ENCODE measurements at regions of chr6 and their contacts with region 1.

Region 1: DNA sequence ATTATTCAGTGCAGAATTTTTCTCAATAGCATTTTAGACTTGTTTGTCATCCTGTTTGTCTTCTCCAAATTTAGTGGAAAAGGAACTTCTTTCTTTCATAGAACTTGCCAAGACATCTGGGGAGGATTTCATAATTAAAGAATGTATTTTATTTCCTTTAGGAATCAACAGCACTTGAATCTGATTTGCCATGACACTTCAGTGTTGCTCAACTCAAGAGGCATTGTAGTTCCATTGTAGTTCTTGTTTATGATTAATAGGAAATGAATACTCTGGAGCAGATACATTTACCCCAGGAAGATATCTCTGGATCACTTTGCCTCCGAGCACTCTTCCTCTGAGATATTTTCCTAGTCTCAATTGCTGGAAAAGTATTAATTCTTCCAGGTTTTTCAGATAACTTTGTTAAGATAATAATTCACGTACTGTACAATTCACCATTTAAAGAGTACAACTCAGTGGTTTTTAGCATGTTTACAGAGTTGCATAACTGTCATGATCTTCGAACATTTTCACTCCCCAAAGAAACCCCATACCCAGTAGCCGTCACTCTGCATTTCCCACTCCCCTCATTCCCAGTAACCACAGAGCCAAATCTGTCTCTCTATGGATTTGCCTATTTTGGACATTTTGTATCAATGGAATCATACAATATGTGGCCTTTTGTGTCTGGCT is 29.7 kb downstream of the AKAP12 start:
- DNase-seq: no peak

Region 2: GRCh38 chr6:149918151-149918905 is 1351.1 kb before region 1 on chr6:
- intact Hi-C with region 1: no loop called
- DNase-seq: peak; percentile 46

Region 3: GRCh38 chr6:152146385-152146784 is 876.9 kb after region 1 on chr6:
- intact Hi-C with region 1: loop called in 1 of 2 experiments (anchors 10 kb)
- DNase-seq: no peak

Measured in posterior vena cava (tissue), 2 donors.